ENCODE measurements at regions of chr1 and their contacts with region 1.

Region 1: DNA sequence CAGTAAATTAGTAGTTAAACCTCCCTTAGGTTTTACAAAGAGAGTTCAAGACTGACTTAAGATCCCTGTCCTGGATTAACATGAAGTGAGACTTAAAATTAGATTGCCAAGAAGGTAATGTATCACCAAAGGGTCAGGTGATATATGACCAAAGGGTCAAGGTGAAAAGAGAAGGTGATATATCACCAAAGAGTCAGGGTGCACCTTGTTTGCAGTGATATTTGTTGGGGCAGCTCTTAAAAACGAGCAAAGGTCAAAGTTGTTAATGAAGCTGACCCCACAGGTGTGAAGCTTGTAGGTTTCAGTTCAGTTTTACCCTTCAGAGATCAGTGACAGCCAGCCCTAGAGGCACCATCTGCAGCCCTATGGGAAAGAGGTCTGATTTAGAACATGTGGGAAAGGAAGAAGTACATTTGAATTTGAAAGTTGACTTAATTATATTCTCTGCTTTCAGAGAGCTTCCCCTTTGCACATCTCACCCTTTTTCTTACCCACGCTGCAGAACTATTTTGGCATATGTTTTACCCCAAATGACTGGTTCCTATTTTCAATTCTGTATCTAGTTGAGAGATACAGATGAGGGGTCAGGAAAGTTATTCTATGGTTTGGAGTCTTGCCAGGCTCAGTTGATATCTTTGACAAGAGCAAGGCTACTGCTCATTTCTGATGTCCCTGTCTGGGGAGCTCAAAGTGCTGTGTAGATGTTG is 170.8 kb downstream of the S1PR1 start:
- DNase-seq: peak; percentile 75
- ATAC-seq: peak; percentile 70
- H3K4me3 ChIP-seq: peak overlapping the region in 1 of 5 experiments; percentile 21
- H3K4me3 Mint-ChIP-seq: peak overlapping the region; percentile 46
- H3K27ac ChIP-seq: peak overlapping the region; percentile 49 to 70
- H3K27ac Mint-ChIP-seq: peak overlapping the region; percentile 74
- H3K4me1 ChIP-seq: peaks cover 58 to 63% of the 10 kb centered on the region in 2 donors
- H3K4me1 Mint-ChIP-seq: peaks cover 66% of the 10 kb centered on the region
- H3K27me3 ChIP-seq: no peaks in the 10 kb centered on the region
- H3K27me3 Mint-ChIP-seq: no peaks in the 10 kb centered on the region
- CTCF ChIP-seq: no peak

Region 2: GRCh38 chr1:101438359-101438758 is 30.7 kb after region 1 on chr1:
- CTCF ChIA-PET with region 1: interaction called, 11 read pairs
- POLR2A ChIA-PET with region 1: no interaction called
- intact Hi-C with region 1: no loop called
- DNase-seq: peak; percentile 39
- ATAC-seq: peak; percentile 29
- H3K4me3 ChIP-seq: no peak overlapping the region
- H3K4me3 Mint-ChIP-seq: no peak overlapping the region
- H3K27ac ChIP-seq: no peak overlapping the region
- H3K27ac Mint-ChIP-seq: no peak overlapping the region
- H3K4me1 ChIP-seq: peaks cover 33 to 34% of the 10 kb centered on the region in 2 donors
- H3K4me1 Mint-ChIP-seq: peaks cover 27% of the 10 kb centered on the region
- H3K27me3 ChIP-seq: no peaks in the 10 kb centered on the region
- H3K27me3 Mint-ChIP-seq: no peaks in the 10 kb centered on the region
- CTCF ChIP-seq: peak; percentile 19